ENCODE measurements at regions of chr2 and their contacts with region 1.

Region 1: DNA sequence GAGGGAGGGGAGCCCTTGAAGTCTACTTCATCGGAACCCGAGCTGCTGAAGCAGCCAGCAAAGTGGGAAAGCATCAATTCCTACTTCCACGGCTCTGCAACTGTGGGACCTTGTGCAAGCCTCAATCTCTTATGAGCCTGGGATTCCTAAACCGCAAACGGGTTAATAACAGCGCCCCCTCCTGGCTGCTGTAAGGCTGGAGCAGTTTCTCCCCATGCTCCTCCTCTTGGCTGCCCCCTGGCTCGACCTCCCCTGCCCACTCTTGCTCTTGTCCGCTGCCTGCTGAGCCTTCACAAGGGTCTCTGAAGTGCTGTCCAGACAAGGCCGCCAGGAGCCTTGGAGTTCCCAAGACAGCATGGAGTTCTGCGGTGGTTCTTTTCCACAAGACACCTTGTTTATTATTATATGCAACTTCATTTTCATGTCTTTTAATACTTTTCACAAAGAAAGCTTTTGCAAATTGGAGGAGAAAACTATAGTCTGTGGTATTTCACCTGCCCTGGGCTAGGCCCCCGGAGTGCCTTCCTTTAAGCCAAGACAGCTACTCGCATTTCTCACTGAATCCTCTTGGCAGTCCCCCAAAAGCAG is 157.2 kb downstream of the DDX1 start:
- DNase-seq: peak; percentile 86
- ATAC-seq: peak; percentile 66
- H3K4me3 Mint-ChIP-seq: no peak overlapping the region
- H3K27ac Mint-ChIP-seq: no peak overlapping the region
- H3K4me1 Mint-ChIP-seq: peaks cover 22% of the 10 kb centered on the region
- H3K27me3 Mint-ChIP-seq: peaks cover 2% of the 10 kb centered on the region; the same call in 1 of the 2 replicates
- CTCF ChIP-seq: peak; percentile 94

Region 2: DNA sequence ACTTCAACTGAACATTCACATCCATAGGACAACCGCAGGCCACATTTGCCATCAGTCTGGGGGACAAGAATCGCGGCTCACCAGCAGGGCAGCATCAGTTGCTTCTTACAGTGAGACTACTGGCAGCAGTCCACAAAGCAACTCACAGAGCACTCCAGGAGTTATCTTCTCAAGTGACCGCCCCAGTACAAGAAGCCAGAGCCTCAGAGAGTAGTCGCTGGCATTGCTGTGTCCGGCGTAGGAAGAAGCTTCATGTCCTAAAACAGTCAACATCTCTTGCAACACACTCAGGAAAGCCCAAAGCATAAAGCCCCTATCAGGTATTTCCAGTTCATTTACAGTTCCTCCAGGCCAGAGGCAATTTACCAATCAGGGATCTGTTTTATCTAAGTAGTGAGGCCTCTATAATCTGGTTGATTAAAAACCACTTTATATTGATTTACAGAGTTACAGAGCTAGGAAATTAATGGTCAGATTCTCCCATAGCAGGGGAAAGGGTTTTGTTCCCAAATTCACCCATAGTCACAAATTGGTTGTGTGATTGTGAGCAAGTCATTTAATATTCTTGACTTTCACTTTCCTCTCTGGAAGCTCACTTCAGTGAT is 365.0 kb before region 1 on chr2:
- CTCF ChIA-PET with region 1: no interaction called
- POLR2A ChIA-PET with region 1: no interaction called
- DNase-seq: no peak
- ATAC-seq: no peak
- H3K4me3 Mint-ChIP-seq: no peak overlapping the region
- H3K27ac Mint-ChIP-seq: no peak overlapping the region
- H3K4me1 Mint-ChIP-seq: peaks cover 14% of the 10 kb centered on the region
- H3K27me3 Mint-ChIP-seq: no peaks in the 10 kb centered on the region
- CTCF ChIP-seq: no peak

Region 3: DNA sequence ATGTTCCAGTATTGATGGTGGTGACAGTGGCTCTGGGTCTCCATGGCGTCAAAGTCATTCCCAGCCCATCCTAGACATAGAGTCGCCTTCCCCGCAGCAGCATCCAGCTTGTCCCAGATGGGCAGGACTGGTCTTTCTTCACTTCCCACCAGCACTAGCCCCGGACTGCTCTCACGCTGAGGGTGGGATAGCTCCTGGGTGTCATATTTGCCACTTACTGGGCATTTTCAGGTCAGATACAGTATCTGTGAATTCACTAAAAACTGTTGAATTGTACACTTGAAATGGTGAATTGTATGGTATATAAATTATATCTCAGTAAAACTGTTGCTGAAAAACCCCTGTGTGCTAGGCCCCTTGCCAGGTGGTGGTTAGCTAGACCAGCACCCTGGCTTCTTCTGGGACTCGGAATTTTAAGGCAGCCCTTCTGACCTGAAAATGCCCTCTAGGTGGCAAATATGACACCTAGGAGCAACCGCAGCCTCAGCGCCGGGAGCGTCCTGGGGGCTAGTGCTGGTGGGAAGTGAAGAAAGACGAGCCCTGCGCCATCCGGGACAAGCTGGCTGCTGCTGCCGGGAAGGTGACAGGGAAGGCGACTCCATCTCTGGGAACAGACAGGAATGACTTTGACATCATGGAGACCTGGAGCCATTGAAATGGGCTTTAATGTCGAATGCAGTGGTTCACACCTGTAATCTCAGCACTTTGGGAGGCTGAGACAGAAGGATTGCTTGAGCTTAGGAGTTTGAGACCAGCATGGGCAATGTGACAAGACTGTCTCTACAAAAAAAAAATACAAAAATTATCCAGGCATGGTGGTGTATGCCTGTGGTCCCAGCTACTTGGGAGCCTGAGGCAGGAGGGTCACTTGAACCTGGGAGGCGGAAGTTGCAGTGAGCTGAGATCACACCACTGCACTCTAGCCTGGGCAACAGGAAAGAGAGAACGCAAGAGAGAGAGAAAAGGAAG is 100.9 kb before region 1 on chr2:
- CTCF ChIA-PET with region 1: interaction called, 12 read pairs
- POLR2A ChIA-PET with region 1: no interaction called
- DNase-seq: no peak
- ATAC-seq: no peak; the same call in 1 of the 2 replicates
- H3K4me3 Mint-ChIP-seq: no peak overlapping the region
- H3K27ac Mint-ChIP-seq: no peak overlapping the region
- H3K4me1 Mint-ChIP-seq: peaks cover 8% of the 10 kb centered on the region
- H3K27me3 Mint-ChIP-seq: no peaks in the 10 kb centered on the region
- CTCF ChIP-seq: no peak

Region 4: DNA sequence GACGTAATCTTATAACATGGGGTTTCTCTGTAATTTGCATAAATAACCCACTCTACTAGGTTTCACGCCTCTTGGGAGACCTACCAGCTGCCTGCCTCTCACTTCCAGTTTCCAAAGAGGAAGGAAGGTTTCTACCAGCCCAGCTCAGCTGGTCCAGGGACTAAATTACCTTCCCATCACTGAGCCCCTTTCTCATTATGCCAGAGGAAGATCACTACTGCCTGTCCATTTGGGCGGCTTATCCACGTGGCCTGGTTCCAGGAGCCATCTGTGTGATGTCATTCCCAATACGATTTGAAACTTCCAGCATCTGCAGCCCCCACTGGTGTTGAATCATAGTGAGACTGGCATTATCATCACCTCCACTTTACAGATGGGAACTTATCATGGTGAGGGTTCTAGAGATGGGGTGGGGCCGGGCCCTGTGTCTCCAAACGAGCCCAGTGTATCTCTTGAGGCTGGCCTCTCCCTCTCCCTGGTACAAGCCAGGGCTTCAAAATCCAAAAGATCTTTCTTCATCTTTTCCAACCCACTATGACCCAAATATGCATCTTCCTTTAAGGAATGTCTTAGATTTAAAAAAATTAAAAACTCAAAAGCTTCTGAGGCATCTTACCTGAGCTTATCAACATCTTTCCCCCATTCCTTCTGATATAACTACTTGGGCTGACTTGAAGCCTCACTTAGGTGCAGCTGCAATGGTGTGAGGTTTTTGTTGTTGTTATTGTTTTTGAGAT is 16.3 kb before region 1 on chr2:
- CTCF ChIA-PET with region 1: interaction called, 11 read pairs
- POLR2A ChIA-PET with region 1: no interaction called
- DNase-seq: no peak
- ATAC-seq: no peak
- H3K4me3 Mint-ChIP-seq: no peak overlapping the region
- H3K27ac Mint-ChIP-seq: no peak overlapping the region
- H3K4me1 Mint-ChIP-seq: peaks cover 21% of the 10 kb centered on the region
- H3K27me3 Mint-ChIP-seq: no peaks in the 10 kb centered on the region; the same call in 1 of the 2 replicates
- CTCF ChIP-seq: no peak

Region 5: DNA sequence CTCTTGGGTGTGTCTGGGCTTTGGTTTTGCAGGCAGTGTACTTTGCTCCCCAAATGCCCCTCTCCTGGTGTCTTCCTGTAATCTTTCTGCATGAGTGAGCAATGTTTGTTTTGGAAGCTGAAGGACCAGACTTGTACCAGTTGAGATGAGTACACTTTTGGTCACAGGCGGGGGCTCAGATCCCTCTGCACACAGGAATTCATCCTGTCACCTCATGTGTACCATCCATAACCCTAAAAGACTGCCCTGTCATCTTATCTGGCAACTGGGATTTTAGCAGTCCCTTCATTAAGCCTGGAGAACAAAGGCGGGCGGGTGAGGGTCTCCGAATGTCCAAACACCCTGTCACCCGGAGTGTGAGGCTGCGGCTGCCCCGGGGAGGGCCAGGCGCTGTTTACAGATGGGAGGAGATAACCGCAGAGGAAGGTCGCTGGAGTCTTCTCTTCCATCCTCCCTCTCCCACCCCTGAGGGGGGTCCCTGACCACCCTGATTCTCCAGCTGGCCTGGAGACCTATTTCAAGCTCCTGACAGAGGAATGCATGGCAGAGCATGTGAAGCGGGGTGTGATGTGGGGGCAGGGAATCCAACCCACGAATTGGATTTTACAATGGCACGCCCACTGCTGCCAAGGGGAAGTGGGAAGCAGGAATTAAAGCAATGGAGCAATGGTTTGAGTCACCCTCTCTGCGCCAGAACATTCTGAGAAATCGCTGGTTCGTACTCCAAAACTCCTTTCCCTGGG is 33.4 kb after region 1 on chr2:
- CTCF ChIA-PET with region 1: no interaction called
- POLR2A ChIA-PET with region 1: no interaction called
- DNase-seq: no peak
- ATAC-seq: no peak
- H3K4me3 Mint-ChIP-seq: no peak overlapping the region
- H3K27ac Mint-ChIP-seq: no peak overlapping the region
- H3K4me1 Mint-ChIP-seq: no peaks in the 10 kb centered on the region
- H3K27me3 Mint-ChIP-seq: no peaks in the 10 kb centered on the region
- CTCF ChIP-seq: no peak

Region 6: DNA sequence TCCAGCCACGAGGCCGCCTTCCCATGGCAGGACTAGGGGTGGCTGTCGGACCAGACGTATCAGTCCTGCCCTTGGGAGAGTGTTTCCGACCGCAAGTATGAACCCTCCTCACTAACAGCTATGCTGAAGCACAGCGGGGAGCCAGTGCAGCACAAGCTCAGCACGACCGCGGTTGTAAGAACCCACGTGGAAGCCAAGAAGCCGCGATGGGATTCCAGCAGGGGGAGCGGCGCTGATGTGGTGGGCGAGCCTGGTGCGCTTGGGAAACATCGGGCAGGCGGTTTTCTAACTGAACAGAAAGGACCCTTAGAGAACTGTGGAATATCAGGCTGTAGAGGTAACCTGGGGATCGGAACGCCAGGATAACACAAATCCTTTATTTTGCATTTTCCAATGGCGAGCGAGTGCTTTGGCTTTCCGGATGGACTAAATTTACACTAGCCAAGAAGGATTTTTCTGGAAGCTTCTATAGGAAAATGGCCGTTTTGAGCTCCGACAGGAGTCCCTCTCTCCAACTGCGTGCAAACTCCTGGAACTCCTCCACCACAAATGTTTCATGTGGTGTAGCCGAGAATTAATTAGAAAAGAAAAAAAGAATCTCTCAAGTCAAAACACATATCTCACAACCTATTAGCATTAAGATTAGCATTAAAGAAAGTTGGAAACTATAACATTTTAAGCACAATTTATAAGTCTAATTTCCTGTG is 59.5 kb after region 1 on chr2:
- CTCF ChIA-PET with region 1: interaction called, 10 read pairs
- POLR2A ChIA-PET with region 1: no interaction called
- DNase-seq: peak; percentile 54
- ATAC-seq: peak; percentile 35
- H3K4me3 Mint-ChIP-seq: no peak overlapping the region
- H3K27ac Mint-ChIP-seq: no peak overlapping the region
- H3K4me1 Mint-ChIP-seq: peaks cover 55% of the 10 kb centered on the region
- H3K27me3 Mint-ChIP-seq: peaks cover 15% of the 10 kb centered on the region
- CTCF ChIP-seq: no peak

Measured in WTC11 (cell line).